Endothelial cell of umbilical vein (primary cell): ENCODE measurements at regions of chr1 and their contacts with region 1.

Region 1: DNA sequence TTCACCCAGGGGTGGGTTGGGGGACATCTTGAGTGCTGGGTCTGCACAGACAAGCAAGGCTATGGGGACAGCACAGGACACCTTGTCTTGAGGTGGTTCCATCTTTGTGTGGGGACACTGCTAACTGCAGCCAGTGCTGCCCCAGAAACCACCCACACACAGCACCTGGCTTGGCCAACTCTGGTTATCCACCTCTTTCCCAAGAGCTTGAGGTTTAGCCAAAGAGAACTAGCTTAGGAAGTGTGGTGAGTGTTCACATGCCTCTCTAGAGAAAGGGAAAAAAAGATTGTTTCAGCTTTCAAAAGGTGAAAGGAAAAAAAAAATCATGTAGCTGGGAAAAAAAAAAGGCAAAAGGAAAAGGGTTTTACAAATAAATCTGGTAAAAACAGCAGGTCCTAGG is 32.4 kb downstream of the BCAR3 start:
- DNase-seq: no peak
- H3K4me3 ChIP-seq: no peak overlapping the region
- H3K27ac ChIP-seq: no peak overlapping the region
- H3K4me1 ChIP-seq: no peaks in the 10 kb centered on the region
- H3K27me3 ChIP-seq: no peaks in the 10 kb centered on the region
- CTCF ChIP-seq: no peak
- POLR2A ChIP-seq: no peak

Region 2: GRCh38 chr1:93447516-93448291 is 201.5 kb before region 1 on chr1 and contains the start of gene FNBP1L:
- CTCF ChIA-PET with region 1: no interaction called
- POLR2A ChIA-PET with region 1: no interaction called
- dilution Hi-C with region 1: no loop called
- intact Hi-C with region 1: no loop called
- DNase-seq: peak; percentile 78
- H3K4me3 ChIP-seq: peak within 1 kb of the TSS; percentile 14 to 80 (median 70)
- H3K27ac ChIP-seq: peak within 1 kb of the TSS; percentile 65
- H3K4me1 ChIP-seq: peaks cover 13% of the 10 kb centered on the region
- H3K27me3 ChIP-seq: no peaks in the 10 kb centered on the region
- CTCF ChIP-seq: no peak
- POLR2A ChIP-seq: peak; percentile 85
- total RNA-seq, gene FNBP1L: 56.4 and 56.5 TPM in 2 replicates

Region 3: DNA sequence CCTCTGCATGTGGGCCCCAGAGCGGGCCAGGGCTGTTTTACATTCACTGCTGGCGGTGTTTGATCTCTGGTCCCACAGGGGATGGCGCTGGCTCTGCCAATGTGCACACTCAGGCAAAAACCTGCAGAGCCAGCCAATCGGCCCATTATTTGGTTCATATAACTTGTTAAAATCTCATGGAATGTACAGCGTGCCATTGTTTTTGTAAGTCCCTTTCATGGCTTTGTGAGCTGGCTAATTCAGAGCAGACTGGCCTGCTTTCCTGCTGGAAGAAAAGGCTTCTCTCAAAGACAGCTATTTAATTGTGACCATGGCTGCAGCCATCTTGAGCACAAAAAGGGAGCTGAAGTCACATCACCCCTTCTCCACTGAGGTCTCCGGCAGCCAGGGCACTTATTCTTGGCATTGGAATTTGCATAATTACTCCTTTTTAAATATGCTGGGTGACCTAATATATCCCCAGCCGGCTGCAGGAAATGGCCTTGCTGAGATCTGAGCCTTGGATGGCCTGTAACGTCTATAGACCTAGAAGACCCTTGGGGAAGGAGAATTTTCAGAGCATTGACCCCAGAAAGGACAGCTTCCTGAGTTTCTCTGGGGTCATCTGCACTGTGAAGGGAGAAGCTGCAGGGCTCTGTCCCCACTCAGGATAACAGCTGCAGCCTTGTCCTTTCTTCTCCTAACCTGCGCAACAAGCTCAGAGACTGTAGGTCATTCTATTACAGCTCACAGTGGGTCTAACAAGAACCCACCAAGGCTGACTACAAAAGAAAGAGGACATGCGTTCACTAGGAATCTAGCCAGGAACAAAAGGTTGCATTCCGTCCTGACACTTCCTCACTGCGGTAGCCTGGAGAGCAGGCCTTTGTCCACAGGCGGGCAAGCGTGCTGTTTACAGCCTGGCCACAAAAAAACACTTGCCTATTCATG is 13.4 kb before region 1 on chr1:
- CTCF ChIA-PET with region 1: interaction called, 23 read pairs
- POLR2A ChIA-PET with region 1: no interaction called
- dilution Hi-C with region 1: no loop called
- intact Hi-C with region 1: loop called (anchors 1 kb)
- DNase-seq: peak; percentile 73
- H3K4me3 ChIP-seq: no peak overlapping the region
- H3K27ac ChIP-seq: peak overlapping the region; percentile 60
- H3K4me1 ChIP-seq: peaks cover 13% of the 10 kb centered on the region
- H3K27me3 ChIP-seq: no peaks in the 10 kb centered on the region
- CTCF ChIP-seq: peak in 1 of 2 donors; percentile 6
- POLR2A ChIP-seq: no peak